H1 (cell line): ENCODE measurements at regions of chr13 and their contacts with region 1.

Region 1: DNA sequence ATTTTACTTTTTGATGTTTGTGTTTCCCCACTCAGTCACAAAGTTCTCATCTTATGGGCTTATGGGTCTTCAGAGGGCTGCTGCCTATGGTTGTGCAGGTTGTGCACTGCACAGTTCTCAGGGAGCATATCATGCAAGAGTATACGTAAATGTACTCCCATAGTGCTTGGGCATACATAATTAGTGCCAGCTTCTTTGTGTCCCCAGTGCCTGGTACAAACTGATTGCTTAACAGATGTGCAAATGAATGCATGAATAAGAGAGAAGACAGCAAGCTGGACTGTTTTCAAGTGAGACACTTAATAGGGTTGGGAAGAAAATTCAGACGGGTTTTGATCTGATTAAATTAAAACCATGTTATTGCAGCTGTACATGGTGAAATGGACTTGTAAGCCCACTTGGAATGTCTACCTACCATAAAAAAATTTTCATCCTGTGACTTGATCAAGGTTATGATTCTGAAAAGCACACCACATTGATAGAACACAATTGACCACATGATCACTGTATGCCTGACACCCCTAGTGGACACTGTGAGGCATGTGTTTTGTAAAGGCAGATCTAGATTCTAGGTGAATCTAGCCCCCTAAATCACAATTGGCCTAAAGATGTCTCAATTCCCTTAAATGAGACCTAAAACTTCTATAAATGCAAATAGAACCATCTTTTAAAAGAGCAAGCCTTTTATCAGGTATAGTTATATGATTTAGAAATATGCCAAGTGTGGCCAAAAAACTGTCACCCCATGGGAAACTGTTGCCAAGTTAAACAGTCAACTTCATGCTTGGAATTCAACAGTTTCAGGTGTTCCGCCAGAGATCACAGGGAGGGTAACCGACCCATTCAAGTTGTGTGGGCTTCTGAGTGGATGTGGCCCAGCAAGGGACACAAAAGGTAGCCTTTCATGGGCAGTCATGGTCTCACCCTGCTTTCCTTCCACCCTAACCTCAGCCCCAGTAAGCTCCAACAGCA is 27.9 kb downstream of the FAM124A start:
- DNase-seq: no peak
- H3K4me3 ChIP-seq: no peak overlapping the region
- H3K27ac ChIP-seq: no peak overlapping the region; the same call in 1 of the 2 replicates
- H3K4me1 ChIP-seq: peaks cover 5 to 30% (median 20%) of the 10 kb centered on the region in 4 experiments
- H3K27me3 ChIP-seq: no peaks in the 10 kb centered on the region
- CTCF ChIP-seq: peak in 1 of 3 experiments; percentile 82; a peak in 2 of 4 replicates
- EP300 ChIP-seq: no peak
- POLR2A ChIP-seq: no peak
- RAD21 ChIP-seq: peak; percentile 40 to 57

Region 2: DNA sequence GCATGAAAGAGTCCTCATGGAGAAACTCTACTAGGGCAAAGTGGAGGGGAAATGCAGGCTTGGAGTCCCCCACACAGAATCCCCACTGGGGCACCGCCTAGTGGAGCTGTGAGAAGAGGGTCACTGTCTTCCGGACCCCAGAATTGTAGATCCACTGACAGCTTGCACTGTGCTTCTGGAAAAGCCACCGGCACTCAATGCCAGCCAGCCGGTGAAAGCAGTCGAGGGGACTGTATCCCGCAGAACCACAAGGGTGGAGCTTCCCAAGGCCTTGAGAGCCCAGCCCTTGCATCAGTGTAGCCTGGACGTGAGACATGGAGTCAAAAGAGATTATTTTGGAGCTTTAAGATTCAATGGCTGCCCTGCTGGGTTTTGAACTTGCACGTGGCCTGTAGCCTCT is 75.1 kb before region 1 on chr13:
- CTCF ChIA-PET with region 1: no interaction called
- POLR2A ChIA-PET with region 1: interaction called, 110 read pairs
- DNase-seq: peak in 1 of 2 experiments; percentile 60
- H3K4me3 ChIP-seq: peak overlapping the region; percentile 9 to 46 (median 21); a peak in 7 of 8 replicates
- H3K27ac ChIP-seq: peak overlapping the region; percentile 61; the same call in 1 of the 2 replicates
- H3K4me1 ChIP-seq: peaks cover 7 to 11% (median 9%) of the 10 kb centered on the region in 4 experiments; a peak in 6 of 7 replicates
- H3K27me3 ChIP-seq: no peaks in the 10 kb centered on the region
- CTCF ChIP-seq: no peak
- EP300 ChIP-seq: no peak
- POLR2A ChIP-seq: no peak; a peak in 1 of 3 replicates
- RAD21 ChIP-seq: no peak; a peak in 1 of 4 replicates

Region 3: DNA sequence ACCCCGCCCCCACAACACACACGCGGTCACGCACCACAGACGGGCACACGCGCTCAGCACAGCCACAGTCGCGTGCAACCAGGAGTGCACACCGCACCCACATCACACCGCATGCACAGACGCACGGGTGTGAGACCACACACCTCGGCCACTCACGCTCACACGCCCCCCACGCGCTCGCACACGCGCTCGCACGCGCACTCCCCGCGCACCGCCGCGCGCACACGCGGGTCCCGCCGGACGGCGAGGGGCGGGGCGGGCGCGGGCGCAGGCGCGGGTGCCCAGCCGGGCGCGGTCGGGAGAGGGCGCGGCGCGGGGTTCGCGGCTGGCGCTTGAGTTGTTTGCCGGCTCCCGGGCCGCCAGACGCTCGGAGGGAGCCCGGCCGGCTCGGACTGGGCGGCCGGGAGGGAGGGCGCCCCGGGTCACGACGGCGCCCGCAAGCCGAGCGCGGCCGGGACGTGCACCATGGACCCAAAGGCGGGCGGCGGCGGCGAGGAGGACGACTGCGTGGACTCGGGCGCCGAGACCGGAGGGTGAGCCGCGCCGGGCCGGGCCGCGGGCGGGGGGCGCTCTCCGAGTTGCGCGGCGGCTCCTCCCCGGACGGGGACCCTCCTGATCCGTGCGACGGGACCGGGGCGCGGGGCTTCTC is 27.9 kb before region 1 on chr13 and contains the start of gene FAM124A:
- CTCF ChIA-PET with region 1: interaction called, 11 read pairs
- POLR2A ChIA-PET with region 1: interaction called, 20 read pairs
- DNase-seq: peak in 1 of 2 experiments; percentile 80
- H3K4me3 ChIP-seq: peak within 1 kb of the TSS; percentile 80 to 96 (median 89)
- H3K27ac ChIP-seq: peak within 1 kb of the TSS; percentile 24; the same call in 1 of the 2 replicates
- H3K4me1 ChIP-seq: peaks cover 6 to 23% (median 22%) of the 10 kb centered on the region in 4 experiments
- H3K27me3 ChIP-seq: no peaks in the 10 kb centered on the region
- CTCF ChIP-seq: peak; percentile 10 to 71 (median 46); a peak in 3 of 4 replicates
- EP300 ChIP-seq: no peak
- POLR2A ChIP-seq: peak in 1 of 2 experiments; percentile 42; a peak in 2 of 3 replicates
- RAD21 ChIP-seq: peak in 1 of 2 experiments; percentile 43; a peak in 2 of 4 replicates
- total RNA-seq, gene FAM124A: 47.1 and 49.9 TPM in 2 replicates

Region 4: GRCh38 chr13:51230477-51231105 is 19.5 kb before region 1 on chr13:
- CTCF ChIA-PET with region 1: interaction called, 25 read pairs
- POLR2A ChIA-PET with region 1: interaction called, 30 read pairs
- DNase-seq: no peak
- H3K4me3 ChIP-seq: no peak overlapping the region
- H3K27ac ChIP-seq: no peak overlapping the region
- H3K4me1 ChIP-seq: peaks cover 6 to 31% (median 18%) of the 10 kb centered on the region in 4 experiments
- H3K27me3 ChIP-seq: no peaks in the 10 kb centered on the region
- CTCF ChIP-seq: no peak
- EP300 ChIP-seq: no peak
- POLR2A ChIP-seq: no peak
- RAD21 ChIP-seq: no peak

Region 5: DNA sequence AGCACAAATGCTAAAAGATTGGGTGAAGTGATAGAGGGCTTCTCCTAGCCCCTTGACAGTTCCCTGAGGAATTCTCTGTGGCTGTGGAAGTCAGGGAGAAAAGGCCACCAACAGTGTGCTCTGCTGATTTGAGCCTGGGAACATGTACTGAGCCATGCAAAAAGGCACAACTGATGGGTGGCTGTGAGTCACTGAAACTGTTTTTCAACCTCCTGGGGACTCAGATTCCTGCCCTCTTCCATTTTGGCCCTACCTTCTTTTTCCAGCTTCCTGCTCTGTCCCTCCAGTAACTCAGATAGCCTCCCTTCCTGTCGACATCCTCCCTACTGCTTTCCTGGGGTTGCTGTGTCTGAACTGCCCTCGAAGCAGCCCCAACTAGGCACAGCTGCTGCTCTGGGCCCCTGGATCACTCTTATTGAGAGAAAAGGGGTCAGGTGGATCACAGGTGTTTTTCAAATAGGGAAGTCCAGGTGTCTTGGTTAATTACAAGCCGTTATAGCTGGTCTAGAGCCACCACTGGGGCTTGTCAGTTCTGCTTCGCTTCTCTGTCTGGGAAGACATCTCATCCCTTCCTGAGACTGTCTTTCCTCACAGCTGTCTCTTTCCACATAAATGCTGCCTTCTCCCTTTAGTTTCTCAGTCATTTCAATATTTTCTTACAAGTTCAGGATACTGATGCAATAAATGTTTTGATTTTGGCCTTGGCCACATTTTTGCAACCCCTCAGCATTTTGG is 14.1 kb before region 1 on chr13:
- CTCF ChIA-PET with region 1: interaction called, 25 read pairs
- POLR2A ChIA-PET with region 1: interaction called, 30 read pairs
- DNase-seq: no peak
- H3K4me3 ChIP-seq: no peak overlapping the region
- H3K27ac ChIP-seq: peak overlapping the region; percentile 32; the same call in 1 of the 2 replicates
- H3K4me1 ChIP-seq: peaks cover 5 to 13% (median 7%) of the 10 kb centered on the region in 4 experiments; a peak in 5 of 7 replicates
- H3K27me3 ChIP-seq: no peaks in the 10 kb centered on the region
- CTCF ChIP-seq: no peak
- EP300 ChIP-seq: no peak
- POLR2A ChIP-seq: no peak
- RAD21 ChIP-seq: no peak

Region 6: DNA sequence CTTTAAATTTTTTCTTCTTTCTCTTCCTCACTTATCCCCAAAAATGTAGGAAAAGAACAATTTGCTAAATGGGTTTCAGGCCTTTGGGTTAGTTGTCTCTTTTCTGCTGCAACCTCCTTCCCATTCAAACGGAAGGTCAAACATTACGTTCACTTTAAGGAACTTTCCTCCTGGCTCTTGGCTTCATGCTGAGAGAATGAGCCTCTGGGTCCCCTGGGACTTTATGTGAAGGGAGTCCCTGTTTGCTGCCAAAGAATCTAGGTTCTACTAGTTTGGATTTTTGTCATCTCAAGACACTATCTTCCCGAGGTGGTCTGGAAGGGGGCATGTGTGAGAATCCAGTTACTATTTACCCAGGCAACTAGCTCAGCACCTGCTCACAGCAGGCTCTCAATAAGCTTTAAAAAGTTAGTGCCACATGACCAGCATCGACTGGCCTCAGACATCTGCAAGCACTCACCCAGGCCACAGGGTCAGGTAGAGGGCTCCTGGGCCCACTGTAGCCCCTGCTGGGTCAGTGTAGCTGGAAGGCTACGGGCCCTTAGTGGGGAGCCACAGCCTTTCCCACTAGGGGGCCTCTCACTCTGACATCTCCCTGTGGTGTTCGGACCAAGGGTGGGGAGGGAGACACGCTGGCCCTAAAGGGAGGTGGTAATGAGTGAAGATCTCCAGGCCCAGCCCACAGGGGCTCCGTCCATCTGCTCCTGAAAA is 12.6 kb after region 1 on chr13:
- CTCF ChIA-PET with region 1: interaction called, 56 read pairs
- POLR2A ChIA-PET with region 1: interaction called, 12 read pairs
- DNase-seq: no peak
- H3K4me3 ChIP-seq: no peak overlapping the region
- H3K27ac ChIP-seq: no peak overlapping the region
- H3K4me1 ChIP-seq: peaks cover 5 to 22% (median 14%) of the 10 kb centered on the region in 4 experiments; a peak in 6 of 7 replicates
- H3K27me3 ChIP-seq: no peaks in the 10 kb centered on the region
- CTCF ChIP-seq: no peak
- EP300 ChIP-seq: no peak
- POLR2A ChIP-seq: no peak
- RAD21 ChIP-seq: no peak

Region 7: GRCh38 chr13:51269039-51269438 is 19.0 kb after region 1 on chr13:
- CTCF ChIA-PET with region 1: interaction called, 56 read pairs
- POLR2A ChIA-PET with region 1: interaction called, 11 read pairs
- DNase-seq: no peak
- H3K4me3 ChIP-seq: no peak overlapping the region
- H3K27ac ChIP-seq: no peak overlapping the region
- H3K4me1 ChIP-seq: peaks cover 0 to 10% (median 1%) of the 10 kb centered on the region in 4 experiments; a peak in 3 of 7 replicates
- H3K27me3 ChIP-seq: no peaks in the 10 kb centered on the region
- CTCF ChIP-seq: no peak
- EP300 ChIP-seq: no peak
- POLR2A ChIP-seq: no peak
- RAD21 ChIP-seq: no peak